PC-9 (cell line): ENCODE measurements at regions of chr16 and their contacts with region 1.

Region 1: DNA sequence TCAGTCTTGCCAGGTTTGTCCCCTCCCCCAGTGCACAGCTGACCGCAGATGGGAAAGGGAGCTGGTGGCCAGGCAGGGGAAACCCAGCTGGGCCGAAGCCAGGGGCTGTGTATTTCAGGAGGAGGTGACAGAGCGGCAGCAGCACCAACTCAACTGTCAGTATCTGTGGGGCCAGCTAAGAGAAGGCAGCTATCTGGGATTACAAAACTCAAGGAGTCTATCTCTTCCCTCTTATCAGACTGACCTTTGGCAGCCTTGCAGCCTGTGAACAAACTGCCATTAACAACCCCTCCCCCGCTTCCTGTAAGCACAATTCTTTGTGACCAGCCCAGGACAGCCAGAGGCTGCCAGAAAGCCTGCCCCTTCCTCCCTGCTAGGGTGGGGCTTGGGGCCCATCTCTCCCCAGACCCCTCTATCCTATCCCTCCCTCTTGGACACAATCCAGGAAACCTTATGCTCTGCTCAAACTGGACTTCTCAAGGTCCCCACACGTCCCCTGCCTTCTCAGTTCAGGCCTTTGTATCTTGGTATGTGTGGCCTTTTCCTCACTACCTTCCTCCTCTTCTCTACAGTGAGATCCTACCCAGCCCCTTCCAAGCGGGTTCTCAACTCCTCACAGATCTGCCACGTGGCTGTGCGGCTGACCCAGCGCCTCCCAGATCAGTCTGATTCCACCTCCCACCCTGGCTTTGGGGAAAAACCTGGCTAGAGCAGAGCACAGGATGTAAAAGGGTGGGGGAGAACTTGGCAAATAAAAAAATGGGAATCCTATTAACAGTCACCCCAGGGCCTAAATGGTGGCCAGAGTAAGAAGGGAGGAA is 10.5 kb downstream of the ST3GAL2 start:
- DNase-seq: peak; percentile 82 to 89
- H3K4me3 ChIP-seq: peak overlapping the region; percentile 13; the same call in 1 of the 2 replicates
- H3K27ac ChIP-seq: peak overlapping the region; percentile 75
- H3K4me1 ChIP-seq: peaks cover 52% of the 10 kb centered on the region
- H3K27me3 ChIP-seq: no peaks in the 10 kb centered on the region
- CTCF ChIP-seq: no peak

Region 2: GRCh38 chr16:70395345-70395901 is 33.0 kb before region 1 on chr16:
- CTCF ChIA-PET with region 1: no interaction called
- POLR2A ChIA-PET with region 1: interaction called, 13 read pairs
- intact Hi-C with region 1: no loop called
- DNase-seq: peak; percentile 60 to 78
- H3K4me3 ChIP-seq: no peak overlapping the region
- H3K27ac ChIP-seq: no peak overlapping the region
- H3K4me1 ChIP-seq: peaks cover 16% of the 10 kb centered on the region
- H3K27me3 ChIP-seq: no peaks in the 10 kb centered on the region
- CTCF ChIP-seq: peak; percentile 81

Region 3: GRCh38 chr16:70604407-70605283 is 176.3 kb after region 1 on chr16:
- CTCF ChIA-PET with region 1: no interaction called
- POLR2A ChIA-PET with region 1: no interaction called
- intact Hi-C with region 1: no loop called
- DNase-seq: no peak
- H3K4me3 ChIP-seq: no peak overlapping the region
- H3K27ac ChIP-seq: no peak overlapping the region
- H3K4me1 ChIP-seq: peaks cover 19% of the 10 kb centered on the region
- H3K27me3 ChIP-seq: no peaks in the 10 kb centered on the region
- CTCF ChIP-seq: no peak